HEK293 (cell line): ENCODE measurements at regions of chr2 and their contacts with region 1.

Region 1: DNA sequence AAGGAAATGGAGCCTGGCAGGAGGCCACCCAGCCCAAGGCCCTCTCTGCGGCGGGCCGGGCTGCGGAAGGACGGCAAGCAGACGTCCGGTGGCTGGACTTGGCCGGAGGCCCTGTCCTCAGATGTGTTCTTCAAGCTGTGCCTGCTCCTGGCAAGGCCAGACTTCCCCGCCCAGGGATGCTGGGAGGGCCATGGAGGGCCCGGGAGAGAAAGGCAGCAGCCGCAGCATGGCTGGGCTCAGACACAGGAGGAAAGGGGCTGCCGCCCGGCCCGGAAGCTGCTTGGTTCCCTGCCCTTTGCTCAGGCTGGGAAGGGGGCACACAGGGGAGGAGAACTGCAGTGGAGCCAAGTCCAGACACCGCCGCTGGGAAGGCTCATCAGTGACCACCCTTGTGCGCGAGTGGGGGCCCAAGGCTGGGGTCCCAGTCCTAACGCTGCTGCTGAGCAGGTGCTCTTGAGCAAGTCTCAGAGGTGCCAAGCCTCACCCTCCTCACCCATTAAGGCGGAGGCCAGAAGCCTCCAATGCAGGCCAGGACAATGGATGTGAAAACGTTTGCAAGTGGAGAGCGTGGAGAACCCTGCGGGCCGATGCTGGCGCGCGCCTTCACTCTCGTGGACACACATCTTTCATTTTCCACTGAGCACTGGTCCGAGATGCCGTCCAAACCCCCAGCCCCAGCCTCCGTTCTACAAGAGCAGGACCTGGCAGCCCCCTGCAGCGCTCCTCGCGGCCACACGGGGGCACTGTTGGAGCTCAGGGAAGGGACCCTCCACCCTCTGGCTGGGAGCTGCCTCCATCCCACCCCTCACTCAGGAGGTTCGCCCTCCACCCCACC is 7.9 kb downstream of the CROCC2 start:
- H3K4me3 ChIP-seq: no peak overlapping the region
- H3K27ac ChIP-seq: no peak overlapping the region
- H3K4me1 ChIP-seq: 0 out of 2 replicates have a peak, but pooled peaks cover 2% of the 10 kb centered on the region
- CTCF ChIP-seq: peak; percentile 89

Region 2: GRCh38 chr2:240898108-240898730 is 15.8 kb before region 1 on chr2:
- CTCF ChIA-PET with region 1: interaction called, 10 read pairs
- POLR2A ChIA-PET with region 1: no interaction called
- H3K4me3 ChIP-seq: no peak overlapping the region
- H3K27ac ChIP-seq: no peak overlapping the region
- H3K4me1 ChIP-seq: no peaks in the 10 kb centered on the region
- CTCF ChIP-seq: no peak

Region 3: GRCh38 chr2:240926516-240927389 is 12.7 kb after region 1 on chr2:
- CTCF ChIA-PET with region 1: interaction called, 12 read pairs
- POLR2A ChIA-PET with region 1: no interaction called
- H3K4me3 ChIP-seq: no peak overlapping the region
- H3K27ac ChIP-seq: no peak overlapping the region
- H3K4me1 ChIP-seq: no peaks in the 10 kb centered on the region
- CTCF ChIP-seq: no peak

Region 4: DNA sequence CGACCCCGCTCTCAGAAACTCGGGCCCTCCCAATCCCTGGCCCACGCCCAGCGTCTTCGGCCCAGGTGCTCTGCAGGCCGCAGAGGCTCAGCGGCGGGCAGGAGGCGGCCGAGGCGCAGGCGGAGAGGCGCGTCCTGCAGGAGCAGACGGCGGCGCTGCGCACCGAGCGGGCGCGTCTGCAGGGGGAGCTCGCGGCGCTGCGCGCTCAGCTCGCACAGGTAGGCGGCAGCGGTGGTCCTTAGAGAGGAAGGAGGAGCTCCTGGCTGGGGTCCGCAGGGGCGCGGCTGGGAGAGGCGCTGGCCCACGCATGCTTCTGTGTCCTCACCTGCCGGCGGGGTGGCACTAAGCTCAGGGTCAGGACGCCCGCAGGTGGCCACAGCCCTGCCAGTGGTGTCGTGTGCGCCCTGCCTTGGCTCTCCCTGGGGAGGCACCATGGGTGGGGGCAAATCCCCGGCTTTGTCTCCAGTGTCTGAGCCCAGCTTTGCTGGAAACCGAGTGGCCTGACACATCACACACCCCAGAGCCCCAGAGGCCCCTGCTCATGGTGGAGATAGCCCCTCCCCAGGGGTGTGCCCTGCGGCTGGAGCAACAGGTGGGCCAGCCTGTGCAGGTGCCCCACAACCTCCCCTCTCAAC is 69.5 kb after region 1 on chr2:
- CTCF ChIA-PET with region 1: interaction called, 10 read pairs
- POLR2A ChIA-PET with region 1: no interaction called
- H3K4me3 ChIP-seq: no peak overlapping the region
- H3K27ac ChIP-seq: no peak overlapping the region
- H3K4me1 ChIP-seq: peaks cover 16% of the 10 kb centered on the region
- CTCF ChIP-seq: peak; percentile 94

Region 5: DNA sequence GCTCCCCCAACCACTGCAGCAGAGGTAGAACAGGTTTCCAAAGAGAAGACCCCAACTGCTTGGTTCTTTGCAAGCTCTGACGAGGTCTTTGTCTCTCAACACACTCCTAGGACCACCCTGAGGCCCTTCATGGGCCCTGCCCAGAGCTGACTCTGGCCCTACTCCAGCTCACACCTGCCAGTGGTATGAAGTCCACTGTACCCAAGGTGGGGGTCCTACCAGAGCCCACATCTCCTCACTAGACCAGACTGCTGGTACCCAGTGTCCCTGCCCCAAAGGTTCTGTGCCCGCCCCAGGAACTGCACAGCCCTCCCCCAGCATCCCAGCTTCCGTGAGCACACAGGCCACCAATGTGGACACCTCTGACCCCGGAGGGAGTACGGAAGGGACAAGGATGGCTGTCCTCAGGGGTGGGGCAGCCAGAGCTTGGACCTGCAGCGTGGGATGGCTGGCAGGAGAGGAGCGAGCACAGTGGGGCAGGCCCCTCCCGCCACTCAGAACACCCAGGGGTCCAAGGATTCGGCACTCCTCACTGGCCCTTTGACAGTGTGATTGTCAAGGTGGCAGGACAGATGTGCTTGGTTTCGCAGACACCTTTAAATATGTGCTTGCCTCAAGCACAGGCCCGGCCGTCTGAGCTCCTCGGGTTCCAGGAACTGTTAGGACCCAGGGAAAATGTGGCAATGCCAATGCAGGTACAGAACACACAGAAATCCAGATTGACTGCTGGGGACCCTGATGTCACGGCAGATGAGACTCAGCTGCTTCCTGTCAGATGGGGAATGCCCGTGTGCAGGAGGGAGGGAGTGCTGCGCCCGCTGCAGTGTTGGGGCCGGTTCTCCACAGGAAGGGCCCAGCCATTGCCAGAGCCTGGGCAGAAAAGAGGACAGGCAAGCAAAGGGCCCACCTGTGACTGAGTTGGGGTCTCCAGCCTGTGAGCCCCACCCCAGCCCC is 136.9 kb after region 1 on chr2:
- CTCF ChIA-PET with region 1: no interaction called
- POLR2A ChIA-PET with region 1: no interaction called
- H3K4me3 ChIP-seq: no peak overlapping the region
- H3K27ac ChIP-seq: no peak overlapping the region
- H3K4me1 ChIP-seq: no peaks in the 10 kb centered on the region
- CTCF ChIP-seq: no peak